CD4-positive, alpha-beta T cell (primary cell): ENCODE measurements at regions of chr13 and their contacts with region 1.

Region 1: DNA sequence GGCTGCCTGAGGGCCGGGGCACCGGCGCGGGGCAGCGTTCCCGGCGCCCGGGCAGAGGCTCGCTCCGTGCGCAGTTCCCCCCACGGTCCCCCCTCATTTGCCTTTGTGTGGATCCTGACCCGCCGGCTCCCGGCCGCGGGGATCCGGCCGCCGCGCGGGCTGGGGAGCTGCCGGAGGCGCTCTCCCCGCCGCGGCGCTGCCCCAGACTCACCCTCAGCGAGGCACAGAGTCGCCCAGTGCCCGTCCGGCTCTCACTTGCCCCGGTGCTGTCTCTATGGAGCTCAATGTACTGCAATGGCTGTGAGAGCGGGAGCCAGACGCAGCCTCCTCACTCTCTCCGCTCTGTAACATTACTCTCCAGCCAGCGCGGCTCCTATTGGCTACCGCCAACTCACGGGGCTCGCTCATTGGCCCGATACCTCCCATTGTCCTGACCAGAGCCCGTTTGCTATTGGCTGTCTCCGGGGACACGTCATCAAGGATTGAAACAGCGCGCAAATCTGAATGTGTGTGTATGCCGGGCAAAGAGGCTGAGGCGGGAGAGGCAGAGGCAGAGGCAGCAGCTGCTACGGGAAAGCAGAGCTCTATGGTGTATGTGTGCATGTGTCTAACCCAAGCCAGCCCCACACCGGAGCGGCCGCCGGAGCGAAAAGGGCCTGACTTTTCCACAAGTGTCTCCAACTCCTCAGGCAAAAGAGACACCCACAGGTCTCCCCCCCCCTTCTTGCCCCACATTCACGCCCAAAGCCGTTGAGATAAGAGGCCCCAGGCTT is at the start of gene HMGB1:
- DNase-seq: peak; percentile 92 to 98 (median 94)
- ATAC-seq: peak; percentile 86
- H3K4me3 ChIP-seq: peak within 1 kb of the TSS; percentile 69
- H3K4me3 Mint-ChIP-seq: peak within 1 kb of the TSS; percentile 95
- H3K27ac ChIP-seq: peak within 1 kb of the TSS in 1 of 2 donors; percentile 96
- H3K27ac Mint-ChIP-seq: peak within 1 kb of the TSS; percentile 98
- H3K4me1 ChIP-seq: peaks cover 11% of the 10 kb centered on the region
- H3K4me1 Mint-ChIP-seq: peaks cover 37% of the 10 kb centered on the region
- H3K27me3 ChIP-seq: no peaks in the 10 kb centered on the region
- H3K27me3 Mint-ChIP-seq: peaks cover 6% of the 10 kb centered on the region
- CTCF ChIP-seq: no peak
- total RNA-seq, gene HMGB1: 448 to 465 TPM

Region 2: GRCh38 chr13:29850224-29850898 is 615.4 kb before region 1 on chr13 and contains the start of gene UBL3:
- CTCF ChIA-PET with region 1: no interaction called
- POLR2A ChIA-PET with region 1: interaction called, 6 read pairs
- intact Hi-C with region 1: loop called in 1 of 2 experiments (anchors 5 kb)
- DNase-seq: peak; percentile 89 to 97 (median 93)
- ATAC-seq: peak; percentile 87
- H3K4me3 ChIP-seq: peak within 1 kb of the TSS; percentile 82
- H3K4me3 Mint-ChIP-seq: peak within 1 kb of the TSS; percentile 99
- H3K27ac ChIP-seq: peak within 1 kb of the TSS; percentile 92 to 93
- H3K27ac Mint-ChIP-seq: peak within 1 kb of the TSS; percentile 86
- H3K4me1 ChIP-seq: peaks cover 4% of the 10 kb centered on the region
- H3K4me1 Mint-ChIP-seq: peaks cover 20% of the 10 kb centered on the region
- H3K27me3 ChIP-seq: no peaks in the 10 kb centered on the region
- H3K27me3 Mint-ChIP-seq: no peaks in the 10 kb centered on the region
- CTCF ChIP-seq: no peak
- total RNA-seq, gene UBL3: 39.5 to 41.9 TPM

Region 3: DNA sequence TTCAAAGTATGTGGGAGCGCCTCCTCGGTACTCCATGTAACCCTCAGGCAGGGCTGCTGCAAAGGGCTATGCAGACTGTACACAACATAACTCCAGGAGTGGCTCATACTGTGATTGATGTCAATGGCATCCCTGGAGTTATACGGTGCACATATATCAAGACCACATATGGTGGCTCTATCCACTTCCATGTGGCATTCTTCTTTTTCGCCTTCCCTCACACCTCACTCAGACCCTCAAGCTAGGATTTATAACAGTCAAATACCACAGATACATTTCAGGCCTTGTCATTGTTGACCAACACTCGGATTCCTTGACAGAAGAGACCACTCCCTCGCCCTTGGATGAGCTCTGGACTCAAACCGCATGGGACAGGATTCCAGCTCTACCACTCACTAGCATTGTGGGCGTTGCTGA is 604.1 kb before region 1 on chr13:
- CTCF ChIA-PET with region 1: no interaction called
- POLR2A ChIA-PET with region 1: no interaction called
- intact Hi-C with region 1: no loop called
- DNase-seq: no peak
- ATAC-seq: no peak
- H3K4me3 ChIP-seq: no peak overlapping the region
- H3K4me3 Mint-ChIP-seq: no peak overlapping the region
- H3K27ac ChIP-seq: no peak overlapping the region
- H3K27ac Mint-ChIP-seq: no peak overlapping the region
- H3K4me1 ChIP-seq: no peaks in the 10 kb centered on the region
- H3K4me1 Mint-ChIP-seq: no peaks in the 10 kb centered on the region
- H3K27me3 ChIP-seq: no peaks in the 10 kb centered on the region
- H3K27me3 Mint-ChIP-seq: peaks cover 5% of the 10 kb centered on the region
- CTCF ChIP-seq: no peak

Region 4: DNA sequence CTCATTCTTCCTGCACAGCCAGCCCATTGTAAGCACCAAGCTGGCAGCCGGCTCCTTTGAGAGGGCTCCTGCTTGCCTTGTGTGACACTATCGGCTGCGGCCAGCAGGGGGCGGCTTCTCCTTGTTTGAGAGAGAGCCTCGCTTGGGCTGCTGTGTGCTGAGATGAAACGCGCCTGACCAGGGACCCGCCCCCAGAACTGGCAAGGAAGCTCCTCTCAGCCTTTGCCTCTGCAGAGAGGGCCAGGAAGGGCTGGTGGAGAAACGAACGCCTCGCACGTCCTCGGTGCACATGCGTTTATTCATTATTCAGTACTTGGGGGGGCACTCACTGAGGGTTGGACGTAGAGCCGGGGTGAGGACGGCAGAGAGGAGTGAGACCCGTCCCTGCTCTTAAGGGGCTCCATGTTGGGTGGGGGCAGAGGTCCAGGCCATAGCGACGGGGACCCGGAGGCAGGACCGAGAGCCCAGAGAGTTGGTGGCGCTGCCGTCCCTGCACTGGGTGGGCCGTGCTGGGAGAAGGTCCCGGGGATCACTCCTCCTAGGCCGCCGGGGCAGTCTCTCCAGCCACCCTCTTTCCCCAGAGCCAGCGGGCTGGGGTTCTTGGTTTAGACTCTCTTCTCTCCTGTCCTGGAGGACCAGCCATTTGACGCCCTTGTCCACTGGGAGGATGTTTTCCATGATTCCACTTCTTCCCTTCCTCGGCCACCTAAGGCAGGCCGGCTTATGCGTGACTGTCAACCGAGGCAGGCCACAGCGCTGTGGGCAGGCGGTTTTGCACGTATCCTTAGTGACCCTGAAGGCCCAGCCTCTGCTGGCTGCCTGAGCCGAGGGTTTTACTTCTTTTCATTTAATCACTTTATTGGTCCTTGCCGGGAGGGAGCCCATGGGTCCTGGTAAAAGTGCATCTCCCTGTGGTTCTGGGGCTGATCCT is 332.9 kb before region 1 on chr13:
- CTCF ChIA-PET with region 1: interaction called, 15 read pairs
- POLR2A ChIA-PET with region 1: interaction called, 14 read pairs
- intact Hi-C with region 1: loop called (anchors 1 kb)
- DNase-seq: peak; percentile 93 to 99 (median 98)
- ATAC-seq: peak; percentile 100
- H3K4me3 ChIP-seq: no peak overlapping the region
- H3K4me3 Mint-ChIP-seq: peak overlapping the region; percentile 22
- H3K27ac ChIP-seq: no peak overlapping the region
- H3K27ac Mint-ChIP-seq: no peak overlapping the region
- H3K4me1 ChIP-seq: peaks cover 13% of the 10 kb centered on the region
- H3K4me1 Mint-ChIP-seq: peaks cover 15% of the 10 kb centered on the region
- H3K27me3 ChIP-seq: no peaks in the 10 kb centered on the region
- H3K27me3 Mint-ChIP-seq: no peaks in the 10 kb centered on the region
- CTCF ChIP-seq: peak; percentile 84

Region 5: GRCh38 chr13:30395192-30396084 is 70.3 kb before region 1 on chr13:
- CTCF ChIA-PET with region 1: interaction called, 6 read pairs
- POLR2A ChIA-PET with region 1: interaction called, 17 read pairs
- intact Hi-C with region 1: no loop called
- DNase-seq: peak; percentile 48 to 89 (median 73)
- ATAC-seq: peak; percentile 78
- H3K4me3 ChIP-seq: peak overlapping the region; percentile 62
- H3K4me3 Mint-ChIP-seq: peak overlapping the region; percentile 90
- H3K27ac ChIP-seq: peak overlapping the region; percentile 82 to 94
- H3K27ac Mint-ChIP-seq: peak overlapping the region; percentile 89
- H3K4me1 ChIP-seq: peaks cover 37% of the 10 kb centered on the region
- H3K4me1 Mint-ChIP-seq: peaks cover 58% of the 10 kb centered on the region
- H3K27me3 ChIP-seq: no peaks in the 10 kb centered on the region
- H3K27me3 Mint-ChIP-seq: no peaks in the 10 kb centered on the region
- CTCF ChIP-seq: no peak

Region 6: GRCh38 chr13:30551189-30551588 is 85.4 kb after region 1 on chr13:
- CTCF ChIA-PET with region 1: no interaction called
- POLR2A ChIA-PET with region 1: no interaction called
- intact Hi-C with region 1: loop called (anchors 5 kb)
- DNase-seq: peak in 4 of 14 experiments; percentile 34 to 66 (median 57)
- ATAC-seq: peak; percentile 95
- H3K4me3 ChIP-seq: no peak overlapping the region
- H3K4me3 Mint-ChIP-seq: no peak overlapping the region
- H3K27ac ChIP-seq: no peak overlapping the region
- H3K27ac Mint-ChIP-seq: no peak overlapping the region
- H3K4me1 ChIP-seq: no peaks in the 10 kb centered on the region
- H3K4me1 Mint-ChIP-seq: peaks cover 3% of the 10 kb centered on the region
- H3K27me3 ChIP-seq: no peaks in the 10 kb centered on the region
- H3K27me3 Mint-ChIP-seq: no peaks in the 10 kb centered on the region
- CTCF ChIP-seq: peak; percentile 51

Region 7: DNA sequence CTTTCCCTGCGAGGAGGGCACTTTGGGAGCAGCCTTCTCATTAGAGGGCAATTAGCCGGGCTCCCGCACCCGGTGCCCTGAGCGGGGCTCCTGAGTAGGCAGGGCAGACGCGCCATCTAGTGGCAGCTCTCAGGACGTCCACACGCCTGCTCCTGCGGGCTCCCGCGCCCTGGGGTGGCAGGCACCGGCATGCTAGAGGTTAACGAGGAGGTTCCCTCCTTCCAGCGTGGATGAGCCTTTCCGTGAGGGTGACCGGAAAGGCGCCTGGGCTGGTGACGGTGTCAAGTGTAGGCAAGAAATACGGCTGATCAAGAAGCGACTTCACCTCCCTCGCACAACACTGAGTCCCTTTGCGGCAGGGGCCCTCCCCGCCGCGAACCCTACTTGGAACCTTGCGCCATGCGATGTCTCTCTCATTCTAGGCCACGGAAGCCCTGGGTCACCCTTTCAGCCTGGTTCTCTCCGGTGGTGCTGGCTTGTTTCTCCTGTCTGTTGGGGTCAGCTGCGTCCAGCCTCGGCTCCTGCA is 337.2 kb after region 1 on chr13:
- CTCF ChIA-PET with region 1: no interaction called
- POLR2A ChIA-PET with region 1: no interaction called
- intact Hi-C with region 1: loop called (anchors 2 to 5 kb)
- DNase-seq: peak; percentile 60 to 89 (median 74)
- ATAC-seq: peak; percentile 98
- H3K4me3 ChIP-seq: peak overlapping the region; percentile 23
- H3K4me3 Mint-ChIP-seq: peak overlapping the region; percentile 55
- H3K27ac ChIP-seq: no peak overlapping the region
- H3K27ac Mint-ChIP-seq: no peak overlapping the region
- H3K4me1 ChIP-seq: peaks cover 8% of the 10 kb centered on the region
- H3K4me1 Mint-ChIP-seq: peaks cover 7% of the 10 kb centered on the region
- H3K27me3 ChIP-seq: no peaks in the 10 kb centered on the region
- H3K27me3 Mint-ChIP-seq: no peaks in the 10 kb centered on the region
- CTCF ChIP-seq: peak; percentile 94

Region 8: DNA sequence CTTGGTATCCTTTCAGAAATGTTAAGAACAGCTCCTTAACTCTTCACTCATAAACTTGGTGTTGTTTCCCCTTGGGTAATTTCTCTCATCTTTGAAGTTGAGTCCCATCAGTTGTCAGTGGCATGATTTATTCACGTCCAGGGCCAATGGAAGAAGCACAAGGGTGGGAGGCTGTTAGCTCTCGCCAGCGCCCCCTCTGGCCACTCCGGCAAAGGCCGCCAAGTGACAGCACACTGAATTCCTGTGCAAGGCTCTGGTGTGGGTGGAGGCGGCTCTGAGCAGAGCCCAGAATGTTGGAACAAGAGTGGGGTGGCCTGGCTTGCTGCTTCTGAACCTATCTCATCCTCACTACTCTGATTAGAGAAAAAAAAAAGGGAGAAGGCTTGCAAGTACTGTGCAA is 427.2 kb after region 1 on chr13:
- CTCF ChIA-PET with region 1: no interaction called
- POLR2A ChIA-PET with region 1: no interaction called
- intact Hi-C with region 1: no loop called
- DNase-seq: no peak
- ATAC-seq: no peak
- H3K4me3 ChIP-seq: no peak overlapping the region
- H3K4me3 Mint-ChIP-seq: no peak overlapping the region
- H3K27ac ChIP-seq: no peak overlapping the region
- H3K27ac Mint-ChIP-seq: no peak overlapping the region
- H3K4me1 ChIP-seq: no peaks in the 10 kb centered on the region
- H3K4me1 Mint-ChIP-seq: no peaks in the 10 kb centered on the region
- H3K27me3 ChIP-seq: peaks cover under 1 to 5% of the 10 kb centered on the region in 2 experiments
- H3K27me3 Mint-ChIP-seq: peaks cover 49% of the 10 kb centered on the region
- CTCF ChIP-seq: no peak